ENCODE measurements at regions of chr16 and their contacts with region 1.

Region 1: GRCh38 chr16:56964243-56965148 is 2.7 kb downstream of the CETP start:
- DNase-seq: peak; percentile 84 to 96 (median 91)
- ATAC-seq: peak; percentile 99
- H3K4me3 ChIP-seq: no peak overlapping the region
- H3K4me3 Mint-ChIP-seq: peak overlapping the region in 4 of 10 donors; percentile 6 to 62 (median 38)
- H3K27ac ChIP-seq: no peak overlapping the region
- H3K27ac Mint-ChIP-seq: peak overlapping the region in 8 of 9 donors; percentile 60 to 91 (median 82)
- H3K4me1 ChIP-seq: peaks cover 7 to 19% of the 10 kb centered on the region in 2 donors
- H3K4me1 Mint-ChIP-seq: peaks cover 21 to 27% (median 23%) of the 10 kb centered on the region in 7 donors
- H3K27me3 ChIP-seq: no peaks in the 10 kb centered on the region
- H3K27me3 Mint-ChIP-seq: peaks cover 0 to 4% (median 0%) of the 10 kb centered on the region in 5 donors

Region 2: GRCh38 chr16:57013229-57013628 is 48.7 kb after region 1 on chr16:
- CTCF ChIA-PET with region 1: interaction called, 7 read pairs
- POLR2A ChIA-PET with region 1: interaction called, 4 read pairs
- intact Hi-C with region 1: loop called (anchors 1 kb)
- DNase-seq: no peak
- ATAC-seq: no peak
- H3K4me3 ChIP-seq: peak overlapping the region; percentile 24
- H3K4me3 Mint-ChIP-seq: peak overlapping the region in 9 of 10 donors; percentile 36 to 87 (median 72)
- H3K27ac ChIP-seq: peak overlapping the region; percentile 80
- H3K27ac Mint-ChIP-seq: peak overlapping the region; percentile 88 to 98 (median 94)
- H3K4me1 ChIP-seq: peaks cover 81 to 83% of the 10 kb centered on the region in 2 donors
- H3K4me1 Mint-ChIP-seq: peaks cover 53 to 94% (median 82%) of the 10 kb centered on the region in 7 donors
- H3K27me3 ChIP-seq: no peaks in the 10 kb centered on the region
- H3K27me3 Mint-ChIP-seq: no peaks in the 10 kb centered on the region

Region 3: DNA sequence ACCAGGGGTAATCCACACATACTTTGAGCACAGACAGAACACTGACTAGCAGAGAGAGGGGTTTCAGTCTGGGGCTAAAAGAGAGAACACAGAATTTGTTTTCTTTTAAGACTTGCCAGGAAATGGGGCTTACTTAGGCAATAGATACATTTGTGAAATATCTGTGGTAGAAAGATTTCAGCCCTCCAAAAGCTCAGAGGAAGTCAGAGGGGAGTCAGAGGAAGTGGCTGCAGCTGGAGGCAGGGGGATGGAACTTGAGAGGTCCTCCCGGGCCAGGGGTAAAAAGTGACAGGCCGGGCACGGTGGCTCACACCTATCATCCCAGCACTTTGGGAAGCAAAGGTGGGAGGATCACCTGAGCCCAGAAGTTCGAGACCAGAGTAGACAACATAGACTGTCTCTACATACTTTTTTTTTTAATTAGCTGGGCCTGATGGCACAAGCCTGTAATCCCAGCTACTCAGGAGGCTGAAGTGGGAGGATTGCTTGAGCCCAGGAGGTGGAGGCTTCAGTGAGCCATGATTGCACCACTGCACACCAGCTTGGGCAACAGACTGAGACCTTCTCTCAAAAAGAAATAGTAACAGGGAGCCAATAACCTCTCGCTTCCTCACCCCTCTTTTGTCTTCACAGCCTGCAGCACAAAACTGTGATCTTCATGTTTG is 74.8 kb after region 1 on chr16:
- CTCF ChIA-PET with region 1: interaction called, 44 read pairs
- POLR2A ChIA-PET with region 1: interaction called, 16 read pairs
- intact Hi-C with region 1: loop called (anchors 1 kb)
- DNase-seq: peak in 7 of 9 donors; percentile 27 to 50 (median 37)
- ATAC-seq: peak; percentile 24
- H3K4me3 ChIP-seq: peak overlapping the region; percentile 45
- H3K4me3 Mint-ChIP-seq: peak overlapping the region; percentile 55 to 95 (median 76)
- H3K27ac ChIP-seq: peak overlapping the region; percentile 72
- H3K27ac Mint-ChIP-seq: peak overlapping the region; percentile 88 to 99 (median 93)
- H3K4me1 ChIP-seq: peaks cover 82 to 94% of the 10 kb centered on the region in 2 donors
- H3K4me1 Mint-ChIP-seq: peaks cover 66 to 99% (median 86%) of the 10 kb centered on the region in 7 donors
- H3K27me3 ChIP-seq: no peaks in the 10 kb centered on the region
- H3K27me3 Mint-ChIP-seq: no peaks in the 10 kb centered on the region

Region 4: DNA sequence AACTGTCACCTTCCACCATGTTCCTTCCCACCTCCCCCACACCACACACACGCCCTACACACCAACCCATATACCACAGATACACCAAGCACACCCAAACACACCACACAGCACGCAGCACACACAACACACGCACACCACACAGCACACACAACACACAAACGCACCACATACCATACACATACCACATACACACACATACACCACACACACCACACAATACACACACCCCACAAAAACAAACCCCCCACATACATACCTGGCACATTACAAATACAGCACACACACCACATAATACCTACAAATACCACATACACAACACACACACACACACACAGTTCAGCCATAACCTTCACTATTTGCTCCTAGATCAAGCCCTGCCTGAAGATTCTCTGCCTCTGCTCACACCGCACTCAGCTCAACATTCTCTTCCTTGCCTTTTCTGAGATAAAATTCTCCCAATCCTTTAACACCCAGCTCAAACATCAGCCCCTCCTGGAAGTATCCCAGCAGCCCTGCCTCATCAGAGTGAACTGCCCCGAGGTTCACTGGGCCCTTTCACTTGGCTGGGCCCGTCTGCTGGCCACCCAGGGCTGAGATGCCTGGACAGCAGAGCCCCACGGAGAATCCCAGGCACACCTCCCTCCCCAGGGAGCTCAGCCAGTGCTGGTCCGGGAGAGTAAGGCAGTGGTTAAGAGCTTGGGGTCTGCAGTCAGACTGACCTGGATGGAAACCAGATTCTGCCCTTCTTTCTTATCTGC is 96.0 kb after region 1 on chr16:
- CTCF ChIA-PET with region 1: interaction called, 6 read pairs
- POLR2A ChIA-PET with region 1: no interaction called
- intact Hi-C with region 1: loop called in 1 of 2 experiments (anchors 1 kb)
- DNase-seq: no peak
- ATAC-seq: peak; percentile 14
- H3K4me3 ChIP-seq: no peak overlapping the region
- H3K4me3 Mint-ChIP-seq: peak overlapping the region in 2 of 10 donors; percentile 10 to 44
- H3K27ac ChIP-seq: peak overlapping the region; percentile 16
- H3K27ac Mint-ChIP-seq: peak overlapping the region in 8 of 9 donors; percentile 63 to 92 (median 77)
- H3K4me1 ChIP-seq: no peaks in the 10 kb centered on the region
- H3K4me1 Mint-ChIP-seq: peaks cover 4 to 32% (median 17%) of the 10 kb centered on the region in 7 donors
- H3K27me3 ChIP-seq: no peaks in the 10 kb centered on the region
- H3K27me3 Mint-ChIP-seq: no peaks in the 10 kb centered on the region

Region 5: DNA sequence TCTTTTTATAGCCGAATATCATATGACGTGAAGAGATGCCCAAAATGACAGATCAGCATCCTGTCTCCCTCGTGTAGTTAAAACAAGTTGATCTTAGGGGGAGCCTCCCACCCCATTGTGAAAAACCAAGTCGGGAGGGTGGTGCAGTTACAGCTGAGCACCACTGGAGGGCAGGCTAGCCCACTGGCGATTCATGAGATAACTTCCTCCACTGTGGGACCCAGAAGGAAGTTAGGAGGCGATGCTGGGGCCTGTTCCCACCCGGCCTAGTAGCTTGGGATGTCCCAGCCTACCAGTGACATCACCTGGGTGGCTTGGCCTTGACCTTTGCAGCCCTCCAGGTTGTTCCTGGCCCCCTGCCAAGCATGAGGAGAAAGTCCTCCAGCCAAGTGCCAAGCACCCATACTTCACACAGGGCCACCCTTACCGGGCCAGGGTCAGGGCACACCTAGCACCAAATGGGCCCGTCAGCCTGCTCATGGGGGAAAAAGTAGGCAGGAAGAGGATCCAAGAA is 119.8 kb after region 1 on chr16:
- CTCF ChIA-PET with region 1: interaction called, 9 read pairs
- POLR2A ChIA-PET with region 1: interaction called, 3 read pairs
- intact Hi-C with region 1: loop called in 1 of 2 experiments (anchors 1 kb)
- DNase-seq: peak; percentile 52 to 86 (median 80)
- ATAC-seq: peak; percentile 98
- H3K4me3 ChIP-seq: no peak overlapping the region
- H3K4me3 Mint-ChIP-seq: peak overlapping the region in 2 of 10 donors; percentile 3 to 37
- H3K27ac ChIP-seq: peak overlapping the region; percentile 72
- H3K27ac Mint-ChIP-seq: peak overlapping the region; percentile 19 to 97 (median 90)
- H3K4me1 ChIP-seq: peaks cover 11% of the 10 kb centered on the region in 2 donors
- H3K4me1 Mint-ChIP-seq: peaks cover 6 to 16% (median 14%) of the 10 kb centered on the region in 7 donors
- H3K27me3 ChIP-seq: no peaks in the 10 kb centered on the region
- H3K27me3 Mint-ChIP-seq: no peaks in the 10 kb centered on the region

Region 6: DNA sequence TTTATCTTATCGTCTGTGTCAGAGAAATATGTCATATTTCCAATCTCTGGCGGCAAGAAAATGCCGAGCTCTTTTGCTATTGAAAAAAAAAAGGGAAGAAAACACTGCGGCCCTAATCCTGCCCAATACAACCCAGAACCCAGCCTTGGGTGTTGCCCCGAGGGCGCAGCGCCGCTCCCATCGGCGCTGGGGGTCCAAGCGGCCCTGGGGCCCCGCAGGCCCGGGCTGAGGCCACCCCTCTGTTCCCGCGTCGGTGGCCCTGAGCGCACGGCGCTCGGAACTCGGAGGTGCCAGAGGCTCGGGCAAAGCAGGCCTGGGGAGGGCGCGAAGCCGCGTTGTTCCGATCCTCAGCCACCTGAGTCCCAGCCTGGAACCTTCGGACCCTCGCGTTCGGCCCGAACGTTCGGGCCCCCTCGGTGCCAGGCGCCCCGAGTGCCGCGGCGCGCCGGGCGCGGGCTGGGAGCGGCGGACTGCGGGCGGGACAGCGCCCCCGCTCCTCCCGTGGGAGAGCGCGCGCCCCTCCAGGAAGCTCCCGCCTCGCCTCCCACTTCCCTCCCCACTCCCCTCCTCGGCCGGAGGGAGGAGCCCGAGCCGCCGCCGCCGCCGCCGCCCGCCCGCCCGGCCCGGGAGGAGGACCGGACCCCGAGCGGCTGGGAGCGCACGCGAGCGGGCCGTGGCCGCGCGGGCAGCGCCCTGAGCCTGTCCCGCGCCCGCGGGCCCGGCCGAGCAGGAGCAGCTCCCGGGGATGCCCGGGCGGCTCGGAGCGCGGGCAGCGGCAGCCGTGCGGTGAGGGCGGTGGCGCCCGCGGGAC is 127.7 kb after region 1 on chr16 and contains the start of gene CPNE2:
- CTCF ChIA-PET with region 1: interaction called, 4 read pairs
- POLR2A ChIA-PET with region 1: no interaction called
- intact Hi-C with region 1: loop called in 1 of 2 experiments (anchors 1 kb)
- DNase-seq: peak in 2 of 9 donors; percentile 17 to 29
- ATAC-seq: peak; percentile 63
- H3K4me3 ChIP-seq: peak within 1 kb of the TSS; percentile 50
- H3K4me3 Mint-ChIP-seq: peak within 1 kb of the TSS; percentile 65 to 86 (median 80)
- H3K27ac ChIP-seq: peak within 1 kb of the TSS; percentile 10
- H3K27ac Mint-ChIP-seq: peak within 1 kb of the TSS in 8 of 9 donors; percentile 14 to 78 (median 52)
- H3K4me1 ChIP-seq: peaks cover 0 to 13% of the 10 kb centered on the region in 2 donors
- H3K4me1 Mint-ChIP-seq: peaks cover 8 to 19% (median 10%) of the 10 kb centered on the region in 7 donors
- H3K27me3 ChIP-seq: no peaks in the 10 kb centered on the region
- H3K27me3 Mint-ChIP-seq: peaks cover 0 to 34% (median 0%) of the 10 kb centered on the region in 5 donors
- total RNA-seq, gene CPNE2: 1.1 to 11.7 (median 3.5) TPM

Region 7: DNA sequence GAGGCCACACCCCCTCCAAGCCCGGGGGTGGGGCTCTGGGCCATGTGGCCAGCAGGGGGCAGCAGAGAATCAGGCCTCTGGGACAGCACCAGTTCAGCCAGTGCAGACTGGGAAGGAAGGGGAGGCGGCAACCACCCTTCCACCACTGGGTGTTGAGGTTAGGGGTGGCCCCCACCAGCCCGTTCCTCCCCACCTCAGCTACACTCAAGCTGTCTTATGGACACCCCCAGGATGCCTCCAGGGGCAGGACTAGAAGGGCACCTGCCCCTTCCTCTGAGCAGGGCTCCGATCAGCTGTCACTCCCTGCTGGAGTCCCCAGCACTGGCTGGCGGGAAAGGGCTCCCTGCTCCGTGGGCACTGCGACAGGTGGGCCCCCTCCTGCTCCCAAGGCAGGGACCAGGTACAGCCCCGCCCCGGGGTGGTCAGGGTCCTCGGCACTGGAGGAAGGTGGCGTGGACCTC is 792.9 kb after region 1 on chr16:
- CTCF ChIA-PET with region 1: no interaction called
- POLR2A ChIA-PET with region 1: no interaction called
- intact Hi-C with region 1: no loop called
- DNase-seq: peak; percentile 61 to 93 (median 81)
- ATAC-seq: peak; percentile 93
- H3K4me3 ChIP-seq: no peak overlapping the region
- H3K4me3 Mint-ChIP-seq: no peak overlapping the region
- H3K27ac ChIP-seq: no peak overlapping the region
- H3K27ac Mint-ChIP-seq: no peak overlapping the region
- H3K4me1 ChIP-seq: peaks cover 0 to 5% of the 10 kb centered on the region in 2 donors
- H3K4me1 Mint-ChIP-seq: peaks cover 0 to 3% (median 0%) of the 10 kb centered on the region in 7 donors
- H3K27me3 ChIP-seq: no peaks in the 10 kb centered on the region
- H3K27me3 Mint-ChIP-seq: no peaks in the 10 kb centered on the region

Measured in naive thymus-derived CD4-positive, alpha-beta T cell (primary cell).